ENCODE measurements at regions of chr7 and their contacts with region 1.

Region 1: GRCh38 chr7:90262438-90262837 is 17.5 kb downstream of the CFAP69 start:
- DNase-seq: no peak
- ATAC-seq: peak; percentile 92
- H3K4me3 ChIP-seq: no peak overlapping the region
- H3K27ac ChIP-seq: no peak overlapping the region
- H3K4me1 ChIP-seq: no peaks in the 10 kb centered on the region
- H3K27me3 ChIP-seq: 0 out of 4 replicates have a peak, but pooled peaks cover 0 to under 1% of the 10 kb centered on the region in 2 experiments
- CTCF ChIP-seq: peak; percentile 28 to 68 (median 32); a peak in 4 of 6 replicates
- EP300 ChIP-seq: no peak
- POLR2A ChIP-seq: no peak
- RAD21 ChIP-seq: peak; percentile 82

Region 2: GRCh38 chr7:90250601-90251303 is 11.7 kb before region 1 on chr7:
- CTCF ChIA-PET with region 1: interaction called, 20 read pairs
- POLR2A ChIA-PET with region 1: interaction called, 9 read pairs
- RAD21 ChIA-PET with region 1: interaction called, 18 read pairs
- SMC1A ChIA-PET with region 1: interaction called, 22 read pairs
- in situ Hi-C with region 1: no loop called
- intact Hi-C with region 1: no loop called
- DNase-seq: no peak
- ATAC-seq: peak; percentile 45
- H3K4me3 ChIP-seq: no peak overlapping the region
- H3K27ac ChIP-seq: no peak overlapping the region
- H3K4me1 ChIP-seq: no peaks in the 10 kb centered on the region
- H3K27me3 ChIP-seq: peaks cover 0 to 6% of the 10 kb centered on the region in 2 experiments; a peak in 1 of 4 replicates
- CTCF ChIP-seq: no peak
- EP300 ChIP-seq: no peak
- POLR2A ChIP-seq: no peak
- RAD21 ChIP-seq: no peak

Region 3: GRCh38 chr7:90276033-90276728 is 13.7 kb after region 1 on chr7:
- CTCF ChIA-PET with region 1: interaction called, 10 read pairs
- POLR2A ChIA-PET with region 1: no interaction called
- RAD21 ChIA-PET with region 1: interaction called, 3 read pairs
- SMC1A ChIA-PET with region 1: interaction called, 10 read pairs
- in situ Hi-C with region 1: no loop called
- intact Hi-C with region 1: no loop called
- DNase-seq: no peak
- ATAC-seq: no peak
- H3K4me3 ChIP-seq: no peak overlapping the region
- H3K27ac ChIP-seq: no peak overlapping the region
- H3K4me1 ChIP-seq: no peaks in the 10 kb centered on the region
- H3K27me3 ChIP-seq: no peaks in the 10 kb centered on the region
- CTCF ChIP-seq: no peak
- EP300 ChIP-seq: no peak
- POLR2A ChIP-seq: no peak
- RAD21 ChIP-seq: no peak

Region 4: DNA sequence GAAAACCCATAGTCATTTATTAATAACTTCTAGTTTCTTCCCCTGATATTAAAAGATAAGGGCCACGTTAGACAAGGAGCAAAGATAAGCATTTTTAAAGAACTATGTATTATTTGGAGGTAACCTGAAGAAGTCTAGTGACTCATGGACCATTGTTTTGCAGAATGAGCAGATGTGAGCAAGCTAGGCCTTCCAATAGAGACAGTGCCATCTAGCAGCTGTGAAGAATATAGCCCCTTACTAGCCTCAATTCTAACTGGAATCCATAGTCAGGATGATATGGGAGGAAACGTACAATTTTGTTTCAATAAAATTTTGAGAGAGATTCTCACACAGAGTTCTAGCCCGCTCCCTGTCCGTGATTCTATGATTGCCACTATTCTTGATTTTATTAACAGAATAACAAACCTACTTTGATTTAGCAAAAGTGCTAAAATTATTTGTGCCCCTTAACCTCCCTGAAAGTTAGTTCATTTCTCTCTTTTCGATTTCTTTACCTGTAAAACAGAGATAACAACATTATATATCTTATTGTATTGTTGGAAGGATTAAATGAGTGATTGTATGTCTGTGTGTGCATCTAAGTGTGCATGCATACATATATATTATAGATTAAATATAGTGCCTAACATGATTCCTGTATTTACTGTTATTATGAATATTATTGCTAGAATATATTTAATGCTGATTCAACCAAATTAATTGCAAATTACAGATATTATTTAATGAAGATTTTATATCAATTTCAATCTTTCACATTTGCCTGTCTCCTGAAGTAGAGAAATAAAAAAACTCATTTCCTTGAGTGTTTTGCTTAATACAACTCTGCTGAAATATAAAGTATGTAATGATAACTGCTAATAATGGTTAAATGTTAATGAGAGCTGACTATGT is 36.0 kb after region 1 on chr7:
- CTCF ChIA-PET with region 1: interaction called, 20 read pairs
- POLR2A ChIA-PET with region 1: interaction called, 3 read pairs
- RAD21 ChIA-PET with region 1: interaction called, 6 read pairs
- SMC1A ChIA-PET with region 1: interaction called, 11 read pairs
- in situ Hi-C with region 1: no loop called
- intact Hi-C with region 1: no loop called
- DNase-seq: no peak
- ATAC-seq: peak; percentile 98
- H3K4me3 ChIP-seq: no peak overlapping the region
- H3K27ac ChIP-seq: no peak overlapping the region
- H3K4me1 ChIP-seq: no peaks in the 10 kb centered on the region
- H3K27me3 ChIP-seq: no peaks in the 10 kb centered on the region; a peak in 1 of 4 replicates
- CTCF ChIP-seq: peak; percentile 58 to 72 (median 67)
- EP300 ChIP-seq: no peak
- POLR2A ChIP-seq: no peak
- RAD21 ChIP-seq: peak; percentile 56

Region 5: GRCh38 chr7:90645784-90646183 is 383.3 kb after region 1 on chr7:
- CTCF ChIA-PET with region 1: no interaction called
- POLR2A ChIA-PET with region 1: no interaction called
- RAD21 ChIA-PET with region 1: no interaction called
- SMC1A ChIA-PET with region 1: no interaction called
- in situ Hi-C with region 1: no loop called
- intact Hi-C with region 1: no loop called
- DNase-seq: no peak
- ATAC-seq: peak; percentile 90
- H3K4me3 ChIP-seq: no peak overlapping the region
- H3K27ac ChIP-seq: no peak overlapping the region
- H3K4me1 ChIP-seq: peaks cover 5% of the 10 kb centered on the region; the same call in 1 of the 2 replicates
- H3K27me3 ChIP-seq: no peaks in the 10 kb centered on the region
- CTCF ChIP-seq: no peak
- EP300 ChIP-seq: no peak
- POLR2A ChIP-seq: no peak
- RAD21 ChIP-seq: no peak

Measured in GM12878 (cell line).